ENCODE measurements at regions of chr10 and their contacts with region 1.

Region 1: GRCh38 chr10:80144067-80144695 is 11.7 kb downstream of the PLAC9 start:
- DNase-seq: peak; percentile 16
- ATAC-seq: peak; percentile 78
- H3K4me3 ChIP-seq: peak overlapping the region; percentile 32 to 39
- H3K27ac ChIP-seq: no peak overlapping the region
- H3K4me1 ChIP-seq: peaks cover 13 to 33% of the 10 kb centered on the region in 2 experiments; a peak in 3 of 4 replicates
- H3K27me3 ChIP-seq: no peaks in the 10 kb centered on the region
- CTCF ChIP-seq: no peak
- POLR2A ChIP-seq: no peak
- RAD21 ChIP-seq: no peak

Region 2: DNA sequence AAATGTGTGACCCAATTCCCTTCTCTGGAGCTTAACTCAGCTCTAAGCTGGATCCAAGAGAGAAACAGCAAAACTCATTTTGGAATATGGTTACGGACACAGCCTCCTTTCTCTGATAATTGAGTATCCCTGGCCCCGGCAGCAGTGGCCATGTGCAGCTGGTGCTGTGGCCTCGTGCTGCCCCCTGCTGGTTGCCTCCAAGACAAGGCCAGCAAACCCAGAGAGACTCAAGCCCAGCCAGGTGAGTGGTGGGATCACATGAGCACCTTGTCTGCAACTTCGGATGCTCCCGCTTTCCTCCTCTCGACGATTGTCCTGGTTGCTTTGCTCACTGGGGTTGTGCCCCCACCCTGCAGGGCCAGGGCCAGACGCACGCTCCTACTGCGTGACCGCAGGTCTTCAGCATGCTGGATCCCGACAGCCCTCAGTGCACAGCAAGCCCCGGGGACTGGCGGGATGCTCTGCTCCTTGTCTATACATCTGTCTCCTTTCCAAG is 214.7 kb before region 1 on chr10:
- CTCF ChIA-PET with region 1: no interaction called
- POLR2A ChIA-PET with region 1: no interaction called
- RAD21 ChIA-PET with region 1: no interaction called
- intact Hi-C with region 1: no loop called
- DNase-seq: peak; percentile 62
- ATAC-seq: peak; percentile 98
- H3K4me3 ChIP-seq: no peak overlapping the region
- H3K27ac ChIP-seq: no peak overlapping the region
- H3K4me1 ChIP-seq: peaks cover 0 to 5% of the 10 kb centered on the region in 2 experiments; a peak in 1 of 4 replicates
- H3K27me3 ChIP-seq: 0 out of 2 replicates have a peak, but pooled peaks cover 5% of the 10 kb centered on the region
- CTCF ChIP-seq: peak; percentile 89 to 94 (median 93)
- POLR2A ChIP-seq: no peak
- RAD21 ChIP-seq: peak; percentile 97

Region 3: DNA sequence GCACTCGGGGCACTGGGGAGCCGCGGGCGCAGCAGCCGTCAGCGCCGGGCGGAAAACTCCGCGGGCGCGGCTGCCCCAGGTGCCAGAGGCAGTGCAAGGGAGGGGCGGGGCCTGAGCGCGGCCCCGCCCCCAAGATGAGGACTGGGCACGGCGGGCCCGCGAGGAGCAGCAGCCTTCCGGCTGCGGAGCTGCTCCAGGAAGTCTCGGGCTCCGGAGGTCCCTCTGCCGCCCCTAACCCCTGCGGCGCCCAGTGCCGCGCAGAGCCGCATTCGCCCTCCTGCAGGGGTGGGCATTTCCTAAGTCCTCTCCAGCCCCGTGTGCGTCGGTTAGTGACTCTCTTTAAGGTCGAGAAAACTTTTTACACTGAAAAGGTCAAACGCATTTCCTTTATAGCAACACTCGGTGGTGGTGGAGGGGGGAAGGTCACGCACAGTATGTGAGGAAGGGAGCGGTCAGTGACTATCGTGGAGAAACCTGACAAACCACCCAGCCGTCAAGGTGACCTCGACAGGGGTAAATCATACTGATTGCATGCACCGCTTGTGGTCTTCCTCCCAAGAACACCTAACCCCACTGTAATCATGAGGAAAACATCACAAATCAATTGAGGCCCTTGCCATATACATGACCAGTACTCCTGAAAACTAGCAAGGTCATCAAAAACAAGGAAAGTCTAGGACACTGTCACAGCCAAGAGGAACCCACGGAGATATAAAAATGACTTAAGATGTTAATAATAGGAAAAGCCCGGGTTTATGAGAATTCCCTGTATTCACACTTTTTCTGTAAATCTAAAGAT is 61.5 kb after region 1 on chr10 and contains the start of gene ANXA11:
- CTCF ChIA-PET with region 1: interaction called, 12 read pairs
- POLR2A ChIA-PET with region 1: interaction called, 7 read pairs
- RAD21 ChIA-PET with region 1: no interaction called
- intact Hi-C with region 1: loop called (anchors 5 kb)
- DNase-seq: peak; percentile 61
- ATAC-seq: peak; percentile 67
- H3K4me3 ChIP-seq: peak within 1 kb of the TSS; percentile 74 to 87
- H3K27ac ChIP-seq: peak within 1 kb of the TSS; percentile 99
- H3K4me1 ChIP-seq: peaks cover 48 to 77% of the 10 kb centered on the region in 2 experiments
- H3K27me3 ChIP-seq: no peaks in the 10 kb centered on the region
- CTCF ChIP-seq: no peak
- POLR2A ChIP-seq: peak; percentile 89
- RAD21 ChIP-seq: no peak
- total RNA-seq, gene ANXA11: 181 TPM

Measured in HCT116 (cell line).